HEK293 (cell line): ENCODE measurements at regions of chr12 and their contacts with region 1.

Region 1: DNA sequence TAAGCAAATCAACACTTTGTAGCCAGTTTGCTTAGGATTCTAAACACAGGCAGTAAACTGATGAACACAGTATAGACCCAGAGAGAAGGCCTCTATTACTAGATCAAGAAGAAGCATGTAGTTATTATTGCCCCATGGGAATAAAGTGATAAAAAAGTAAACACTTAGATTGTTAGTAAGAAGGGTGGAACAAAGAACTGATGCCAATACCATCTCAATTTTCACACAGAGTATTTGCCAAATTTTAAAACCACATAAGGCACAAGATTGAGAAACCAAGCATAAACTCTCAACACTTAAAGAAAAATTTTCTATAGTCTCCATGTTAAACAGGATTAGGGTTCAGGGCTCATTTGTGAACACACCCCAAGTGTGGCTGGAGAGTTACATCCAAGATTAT is 77.0 kb upstream of the SYT1 start:
- H3K4me3 ChIP-seq: no peak overlapping the region
- H3K27ac ChIP-seq: no peak overlapping the region
- H3K4me1 ChIP-seq: no peaks in the 10 kb centered on the region
- CTCF ChIP-seq: no peak

Region 2: GRCh38 chr12:78671295-78671694 is 116.3 kb before region 1 on chr12:
- CTCF ChIA-PET with region 1: no interaction called
- POLR2A ChIA-PET with region 1: no interaction called
- H3K4me3 ChIP-seq: no peak overlapping the region
- H3K27ac ChIP-seq: no peak overlapping the region
- H3K4me1 ChIP-seq: no peaks in the 10 kb centered on the region
- CTCF ChIP-seq: no peak

Region 3: DNA sequence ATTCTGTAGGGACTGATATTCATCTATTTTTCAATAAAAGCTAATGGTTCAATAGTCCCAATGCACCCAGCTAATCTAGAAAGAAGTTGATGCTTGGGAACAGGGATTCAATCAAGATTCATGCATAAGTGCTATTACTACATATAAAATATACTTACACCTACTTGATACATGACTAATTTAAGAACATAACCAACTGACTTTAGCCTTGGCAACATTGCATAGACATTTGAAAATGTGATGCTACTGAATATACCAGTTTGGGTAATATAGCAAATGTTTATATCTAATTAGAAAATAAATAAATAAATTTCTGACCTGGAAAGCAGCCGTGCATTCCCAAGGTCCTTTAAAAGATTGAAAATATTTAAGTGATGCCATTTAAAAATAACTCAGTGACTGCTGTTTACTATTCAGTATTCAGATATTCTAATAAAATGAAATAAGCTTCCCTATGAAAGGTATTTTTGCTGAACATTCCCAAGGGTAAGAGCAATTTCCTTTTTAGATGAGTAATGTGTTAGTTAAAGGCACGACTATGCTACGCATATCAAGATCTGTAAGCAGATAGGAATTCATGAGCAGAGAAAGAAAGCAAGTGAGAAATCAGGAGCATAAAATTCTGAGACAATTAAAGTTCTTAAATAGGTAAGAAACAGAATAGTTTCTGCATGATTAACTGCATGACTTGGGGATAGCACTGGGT is 83.6 kb before region 1 on chr12:
- CTCF ChIA-PET with region 1: no interaction called
- POLR2A ChIA-PET with region 1: interaction called, 11 read pairs
- H3K4me3 ChIP-seq: no peak overlapping the region
- H3K27ac ChIP-seq: no peak overlapping the region
- H3K4me1 ChIP-seq: no peaks in the 10 kb centered on the region
- CTCF ChIP-seq: no peak